ENCODE measurements at regions of chr10 and their contacts with region 1.

Region 1: DNA sequence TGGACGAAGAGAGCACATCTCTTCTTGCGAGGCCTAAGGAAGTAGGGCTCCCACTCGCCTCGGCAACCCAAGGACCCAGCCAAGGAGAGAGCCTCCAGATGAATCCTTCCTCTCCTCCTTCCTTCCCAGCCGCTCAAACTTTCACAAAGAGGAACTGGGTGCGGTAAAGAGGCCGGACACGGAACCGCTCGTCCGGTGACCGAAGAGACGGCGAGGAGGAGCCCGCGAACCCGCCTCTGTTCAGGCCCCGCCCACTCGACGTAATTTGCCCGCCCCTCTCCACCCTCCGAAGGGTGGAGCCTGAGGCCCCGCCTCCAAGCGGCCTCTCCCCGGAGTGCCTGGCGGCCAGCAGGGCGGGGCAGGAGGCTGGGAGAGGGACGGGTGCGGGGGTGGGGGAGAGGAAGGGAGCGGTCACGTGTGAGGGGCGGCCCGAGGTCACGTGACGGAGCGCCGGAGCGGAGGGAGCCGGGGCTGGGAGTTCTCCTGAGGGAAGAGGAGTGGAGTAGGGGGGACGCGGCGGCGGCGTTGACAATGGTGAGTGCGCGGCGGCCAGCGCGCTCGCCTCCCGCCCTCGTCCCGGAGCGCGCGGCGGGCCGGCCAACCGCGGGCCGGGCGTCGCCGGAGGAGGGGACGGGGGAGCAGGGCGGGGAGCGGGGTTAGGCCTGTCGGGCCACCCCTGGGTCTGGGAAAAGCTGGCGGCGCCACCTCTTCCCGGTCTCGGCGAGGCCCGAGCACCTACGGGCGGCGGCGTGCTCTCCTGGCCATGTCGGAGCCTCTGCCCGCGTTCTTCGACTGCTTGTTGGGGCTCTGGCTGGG is at the start of gene VPS26A:
- DNase-seq: peak; percentile 100
- ATAC-seq: peak; percentile 95
- H3K4me3 Mint-ChIP-seq: peak within 1 kb of the TSS; percentile 90
- H3K27ac Mint-ChIP-seq: peak within 1 kb of the TSS; percentile 91
- H3K4me1 Mint-ChIP-seq: peaks cover 31% of the 10 kb centered on the region
- H3K27me3 Mint-ChIP-seq: no peaks in the 10 kb centered on the region
- total RNA-seq, gene VPS26A: 27.1 to 32.2 TPM

Region 2: GRCh38 chr10:68720793-68721672 is 402.9 kb before region 1 on chr10 and contains the start of gene CCAR1:
- CTCF ChIA-PET with region 1: no interaction called
- POLR2A ChIA-PET with region 1: no interaction called
- intact Hi-C with region 1: loop called in 1 of 2 experiments (anchors 2 kb)
- DNase-seq: peak; percentile 98
- ATAC-seq: peak; percentile 100
- H3K4me3 Mint-ChIP-seq: peak within 1 kb of the TSS; percentile 91
- H3K27ac Mint-ChIP-seq: peak within 1 kb of the TSS; percentile 96
- H3K4me1 Mint-ChIP-seq: peaks cover 9% of the 10 kb centered on the region
- H3K27me3 Mint-ChIP-seq: no peaks in the 10 kb centered on the region
- total RNA-seq, gene CCAR1: 89.5 to 125 TPM

Region 3: DNA sequence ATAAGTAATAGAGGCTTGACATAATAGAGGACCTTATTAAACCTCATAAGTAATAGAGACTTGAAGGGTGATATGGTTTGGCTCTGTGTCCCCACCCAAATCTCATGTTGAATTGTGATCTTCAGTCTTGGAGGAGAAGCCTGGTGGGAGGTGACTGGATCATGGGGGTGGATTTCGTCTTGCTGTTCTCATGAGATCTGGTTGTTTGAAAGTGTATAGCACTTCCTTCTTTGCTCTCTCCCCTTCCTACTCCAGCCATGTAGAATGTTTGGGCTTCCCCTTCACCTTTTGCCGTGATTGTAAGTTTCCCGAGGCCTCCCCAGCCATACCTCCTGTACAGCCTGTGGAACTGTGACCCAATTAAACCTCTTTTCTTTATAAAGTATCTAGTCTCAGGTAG is 126.7 kb before region 1 on chr10:
- CTCF ChIA-PET with region 1: interaction called, 3 read pairs
- POLR2A ChIA-PET with region 1: no interaction called
- intact Hi-C with region 1: loop called in 1 of 2 experiments (anchors 2 kb)
- DNase-seq: no peak
- ATAC-seq: peak; percentile 10
- H3K4me3 Mint-ChIP-seq: peak overlapping the region; percentile 13
- H3K27ac Mint-ChIP-seq: peak overlapping the region; percentile 96
- H3K4me1 Mint-ChIP-seq: peaks cover 45% of the 10 kb centered on the region
- H3K27me3 Mint-ChIP-seq: no peaks in the 10 kb centered on the region

Region 4: GRCh38 chr10:69092959-69093850 is 30.8 kb before region 1 on chr10:
- CTCF ChIA-PET with region 1: interaction called, 4 read pairs
- POLR2A ChIA-PET with region 1: no interaction called
- intact Hi-C with region 1: loop called (anchors 1 kb)
- DNase-seq: peak; percentile 90
- ATAC-seq: peak; percentile 22
- H3K4me3 Mint-ChIP-seq: peak overlapping the region; percentile 30
- H3K27ac Mint-ChIP-seq: peak overlapping the region; percentile 81
- H3K4me1 Mint-ChIP-seq: peaks cover 60% of the 10 kb centered on the region
- H3K27me3 Mint-ChIP-seq: no peaks in the 10 kb centered on the region

Region 5: GRCh38 chr10:69408318-69409175 is 284.6 kb after region 1 on chr10:
- CTCF ChIA-PET with region 1: interaction called, 7 read pairs
- POLR2A ChIA-PET with region 1: no interaction called
- intact Hi-C with region 1: loop called in 1 of 2 experiments (anchors 1 kb)
- DNase-seq: peak; percentile 95
- ATAC-seq: peak; percentile 93
- H3K4me3 Mint-ChIP-seq: no peak overlapping the region
- H3K27ac Mint-ChIP-seq: peak overlapping the region; percentile 67
- H3K4me1 Mint-ChIP-seq: peaks cover 11% of the 10 kb centered on the region
- H3K27me3 Mint-ChIP-seq: no peaks in the 10 kb centered on the region

Measured in activated CD4-positive, alpha-beta T cell treated with anti-CD3 and anti-CD28 coated beads for 36 hours (primary cell).